Heart right ventricle (tissue), 16 donors: ENCODE measurements at regions of chr13 and their contacts with region 1.

Region 1: GRCh38 chr13:24228852-24229458 is 68.4 kb downstream of the SPATA13 start:
- DNase-seq: peak in 1 of 2 donors; percentile 44
- ATAC-seq: peak in 6 of 8 donors; percentile 21 to 64 (median 37)
- H3K4me3 ChIP-seq: no peak overlapping the region
- H3K27ac ChIP-seq: no peak overlapping the region
- H3K4me1 ChIP-seq: peaks cover 0 to 46% (median 6%) of the 10 kb centered on the region in 9 donors
- H3K27me3 ChIP-seq: no peaks in the 10 kb centered on the region
- CTCF ChIP-seq: peak; percentile 72 to 93 (median 86)

Region 2: DNA sequence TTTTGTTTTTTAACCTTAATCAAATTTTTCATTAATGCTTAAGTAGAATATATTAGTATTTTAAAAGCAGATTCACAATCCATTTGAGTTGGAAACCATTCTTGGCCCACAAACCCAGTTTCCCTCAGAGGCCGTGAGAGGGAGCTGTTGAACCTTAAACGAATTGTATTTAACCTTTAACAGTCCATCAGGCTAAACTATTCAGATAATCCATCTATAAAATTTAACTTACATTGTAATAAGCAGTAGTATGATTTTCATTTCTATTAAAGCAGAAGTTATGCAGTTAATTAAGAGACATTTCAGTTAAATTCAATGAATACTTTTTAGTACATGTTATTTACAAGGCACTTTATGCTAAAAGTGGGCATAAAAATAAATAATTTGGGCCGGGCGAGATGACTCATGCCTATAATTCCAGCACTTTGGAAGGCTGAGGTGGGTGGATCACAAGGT is 208.6 kb before region 1 on chr13:
- intact Hi-C with region 1: loop called in 2 of 10 experiments (anchors 2 to 5 kb)
- DNase-seq: peak in 1 of 2 donors; percentile 54
- ATAC-seq: peak in 6 of 8 donors; percentile 45 to 65 (median 60)
- H3K4me3 ChIP-seq: no peak overlapping the region
- H3K27ac ChIP-seq: no peak overlapping the region
- H3K4me1 ChIP-seq: peaks cover 0 to 16% (median 2%) of the 10 kb centered on the region in 9 donors
- H3K27me3 ChIP-seq: no peaks in the 10 kb centered on the region
- CTCF ChIP-seq: peak; percentile 51 to 89 (median 78)